ENCODE measurements at regions of chr4 and their contacts with region 1.

Region 1: DNA sequence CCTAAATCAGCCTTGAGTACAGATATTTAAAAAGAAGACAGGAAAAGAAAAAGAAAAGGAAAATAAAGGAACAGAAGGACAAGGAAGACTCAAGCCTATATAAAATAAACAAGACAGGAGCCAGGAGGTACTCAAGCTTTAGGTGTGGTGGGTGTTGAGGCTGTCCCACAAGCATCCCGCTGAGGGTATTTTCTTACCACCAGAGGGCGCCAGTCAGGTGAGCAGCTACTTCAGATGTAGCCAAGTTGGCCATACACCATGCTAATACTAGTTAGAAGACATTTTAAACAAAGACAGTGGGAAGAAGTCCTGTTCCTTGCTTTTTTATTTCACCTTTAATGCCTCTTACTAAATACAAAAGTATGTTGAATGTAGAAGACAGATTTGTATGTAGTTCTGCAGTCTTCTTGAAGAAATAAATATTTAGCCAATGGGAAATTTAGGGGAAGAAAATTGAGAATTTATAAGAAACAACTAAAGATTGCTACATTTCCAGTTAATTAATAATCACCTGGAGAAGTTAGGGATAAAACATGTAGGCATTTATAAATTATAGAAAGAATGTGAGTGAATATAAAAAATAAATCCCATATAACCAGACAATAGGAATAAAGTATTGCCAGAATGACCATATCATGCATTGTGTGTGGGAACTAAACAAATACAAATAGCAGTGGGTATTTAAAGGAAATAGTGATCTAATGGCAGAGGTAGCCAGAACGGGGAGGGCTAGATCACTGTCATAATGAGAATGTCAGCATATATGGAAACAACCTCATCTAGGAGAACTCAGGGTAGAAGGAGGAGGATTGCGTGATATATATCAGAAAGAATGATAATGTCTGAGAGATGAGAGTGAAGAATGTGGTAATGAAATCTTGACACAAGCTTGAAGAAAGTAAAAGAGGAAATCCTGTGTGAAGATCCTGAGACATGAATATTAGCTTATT is 71.0 kb downstream of the MTHFD2L start:
- DNase-seq: peak; percentile 49 to 89
- H3K4me3 ChIP-seq: no peak overlapping the region
- H3K27ac ChIP-seq: no peak overlapping the region
- H3K4me1 ChIP-seq: no peaks in the 10 kb centered on the region
- H3K27me3 ChIP-seq: no peaks in the 10 kb centered on the region
- CTCF ChIP-seq: peak; percentile 82 to 90 (median 84)
- EP300 ChIP-seq: no peak
- POLR2A ChIP-seq: no peak
- RAD21 ChIP-seq: peak; percentile 73 to 74

Region 2: DNA sequence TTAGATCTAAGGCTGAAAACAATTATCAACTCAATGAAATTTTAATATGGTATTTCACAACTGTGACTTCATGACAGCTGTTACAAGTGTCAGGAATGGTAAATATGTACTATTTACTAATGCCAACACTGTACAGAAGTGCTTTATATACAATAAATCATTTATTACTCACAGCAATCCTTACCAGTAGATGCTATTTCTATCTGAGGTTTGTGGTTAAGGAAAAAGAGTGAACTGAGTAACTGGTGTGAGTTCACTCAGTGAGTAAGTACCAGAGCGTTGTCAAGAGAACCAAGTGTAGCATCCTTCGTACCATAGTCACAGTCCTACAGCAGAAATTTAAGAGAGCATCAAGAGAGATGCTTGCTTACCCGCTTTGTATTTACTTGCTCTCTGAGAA is 47.7 kb before region 1 on chr4:
- CTCF ChIA-PET with region 1: interaction called, 11 read pairs
- POLR2A ChIA-PET with region 1: no interaction called
- DNase-seq: no peak
- H3K4me3 ChIP-seq: no peak overlapping the region
- H3K27ac ChIP-seq: no peak overlapping the region
- H3K4me1 ChIP-seq: no peaks in the 10 kb centered on the region
- H3K27me3 ChIP-seq: no peaks in the 10 kb centered on the region
- CTCF ChIP-seq: no peak
- EP300 ChIP-seq: no peak
- POLR2A ChIP-seq: no peak
- RAD21 ChIP-seq: no peak

Region 3: GRCh38 chr4:74189331-74190043 is 39.5 kb before region 1 on chr4:
- CTCF ChIA-PET with region 1: interaction called, 21 read pairs
- POLR2A ChIA-PET with region 1: no interaction called
- DNase-seq: no peak
- H3K4me3 ChIP-seq: no peak overlapping the region
- H3K27ac ChIP-seq: no peak overlapping the region
- H3K4me1 ChIP-seq: no peaks in the 10 kb centered on the region
- H3K27me3 ChIP-seq: no peaks in the 10 kb centered on the region
- CTCF ChIP-seq: peak in 2 of 3 experiments; percentile 38 to 49; a peak in 2 of 4 replicates
- EP300 ChIP-seq: no peak
- POLR2A ChIP-seq: no peak
- RAD21 ChIP-seq: peak; percentile 69 to 75

Region 4: DNA sequence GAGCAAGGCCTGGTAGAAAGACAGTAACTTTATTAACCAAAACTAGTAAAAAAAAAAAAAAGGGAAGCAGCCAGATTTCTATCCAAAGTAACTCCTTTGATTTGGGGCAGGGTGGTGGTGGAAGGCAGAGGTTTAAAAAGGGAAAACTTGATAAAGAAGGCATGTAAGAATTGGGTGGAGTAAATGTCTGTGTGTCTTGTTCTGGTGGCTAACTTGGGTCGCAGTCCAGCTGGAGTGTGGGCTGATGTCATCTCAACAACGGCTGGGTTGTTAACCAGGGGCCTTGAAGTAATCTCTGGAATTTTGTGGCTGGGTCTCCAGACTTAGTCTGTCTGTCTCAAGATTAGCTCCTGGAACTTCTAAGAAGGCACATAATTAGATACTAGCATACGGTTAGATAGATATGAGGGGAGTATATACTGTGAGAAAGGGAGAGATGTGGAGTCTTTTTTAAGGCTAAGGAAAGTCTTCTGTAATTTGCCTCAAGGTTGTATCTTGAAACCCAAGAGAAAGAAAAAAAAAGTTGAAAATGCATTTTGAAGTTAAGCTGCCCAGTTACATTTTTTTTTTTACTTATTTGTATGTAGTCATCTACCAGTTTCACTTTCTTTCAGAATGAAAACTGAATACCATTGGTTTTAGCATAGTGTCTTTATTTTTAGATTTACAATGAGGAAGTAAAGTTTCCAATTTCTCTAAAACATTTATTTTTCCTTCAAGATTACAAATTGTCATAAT is 22.7 kb before region 1 on chr4:
- CTCF ChIA-PET with region 1: interaction called, 14 read pairs
- POLR2A ChIA-PET with region 1: no interaction called
- DNase-seq: no peak
- H3K4me3 ChIP-seq: no peak overlapping the region
- H3K27ac ChIP-seq: no peak overlapping the region
- H3K4me1 ChIP-seq: peaks cover 0 to 7% (median 0%) of the 10 kb centered on the region in 4 experiments; a peak in 1 of 7 replicates
- H3K27me3 ChIP-seq: no peaks in the 10 kb centered on the region
- CTCF ChIP-seq: no peak
- EP300 ChIP-seq: no peak
- POLR2A ChIP-seq: no peak
- RAD21 ChIP-seq: no peak

Region 5: DNA sequence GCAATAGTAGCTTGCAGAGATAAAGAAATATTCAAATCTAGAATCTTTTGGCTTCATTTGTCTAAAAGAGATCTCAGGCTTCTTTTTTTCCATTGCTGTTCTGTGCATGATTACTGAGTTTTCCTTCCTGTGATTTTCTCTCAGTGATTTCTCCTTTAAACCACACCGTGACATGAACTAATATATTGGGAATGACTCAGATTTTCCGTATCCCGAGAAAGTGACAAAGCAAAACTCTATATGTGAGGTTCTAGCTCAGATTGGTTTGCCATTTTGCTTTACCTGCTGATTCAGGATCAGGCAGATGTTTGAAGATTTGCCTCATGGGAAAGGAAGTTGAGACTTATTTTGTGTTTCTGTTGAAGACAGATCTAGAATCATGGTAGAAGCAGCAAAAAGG is 11.6 kb before region 1 on chr4:
- CTCF ChIA-PET with region 1: interaction called, 28 read pairs
- POLR2A ChIA-PET with region 1: no interaction called
- DNase-seq: no peak
- H3K4me3 ChIP-seq: no peak overlapping the region
- H3K27ac ChIP-seq: no peak overlapping the region
- H3K4me1 ChIP-seq: peaks cover 0 to 6% (median 2%) of the 10 kb centered on the region in 4 experiments; a peak in 4 of 7 replicates
- H3K27me3 ChIP-seq: no peaks in the 10 kb centered on the region
- CTCF ChIP-seq: no peak
- EP300 ChIP-seq: no peak
- POLR2A ChIP-seq: no peak
- RAD21 ChIP-seq: no peak

Region 6: DNA sequence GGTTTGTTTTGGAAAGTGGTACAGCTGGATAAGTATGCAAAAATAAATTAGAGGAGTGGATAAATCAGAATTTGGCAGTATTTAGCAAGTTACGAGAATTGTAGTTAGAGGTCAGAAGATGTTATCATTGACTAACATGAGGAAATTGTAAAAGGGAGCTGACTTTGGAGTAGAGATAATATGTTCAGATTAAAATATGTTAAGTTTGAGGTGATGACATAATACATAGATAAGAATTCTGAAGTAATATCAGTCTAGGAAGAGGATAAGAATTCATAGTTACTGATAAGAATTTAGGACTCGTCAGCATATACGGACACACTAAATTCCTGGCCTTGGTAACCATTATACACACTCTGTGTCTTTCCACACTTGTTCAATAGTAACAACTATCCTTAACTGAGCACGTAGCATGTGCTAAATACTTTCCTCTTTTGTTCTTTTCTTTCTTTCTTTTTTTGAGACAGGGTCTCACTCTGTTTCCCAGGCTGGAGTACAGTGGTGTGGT is 75.2 kb after region 1 on chr4:
- CTCF ChIA-PET with region 1: interaction called, 18 read pairs
- POLR2A ChIA-PET with region 1: no interaction called
- DNase-seq: no peak
- H3K4me3 ChIP-seq: no peak overlapping the region
- H3K27ac ChIP-seq: no peak overlapping the region
- H3K4me1 ChIP-seq: no peaks in the 10 kb centered on the region
- H3K27me3 ChIP-seq: no peaks in the 10 kb centered on the region
- CTCF ChIP-seq: no peak
- EP300 ChIP-seq: no peak
- POLR2A ChIP-seq: no peak
- RAD21 ChIP-seq: no peak

Region 7: GRCh38 chr4:74311696-74312313 is 82.8 kb after region 1 on chr4:
- CTCF ChIA-PET with region 1: interaction called, 18 read pairs
- POLR2A ChIA-PET with region 1: no interaction called
- DNase-seq: no peak
- H3K4me3 ChIP-seq: no peak overlapping the region
- H3K27ac ChIP-seq: no peak overlapping the region
- H3K4me1 ChIP-seq: no peaks in the 10 kb centered on the region
- H3K27me3 ChIP-seq: no peaks in the 10 kb centered on the region
- CTCF ChIP-seq: peak in 2 of 3 experiments; percentile 56 to 61; a peak in 2 of 4 replicates
- EP300 ChIP-seq: no peak
- POLR2A ChIP-seq: no peak
- RAD21 ChIP-seq: peak; percentile 78